ENCODE measurements at regions of chr9 and their contacts with region 1.

Region 1: DNA sequence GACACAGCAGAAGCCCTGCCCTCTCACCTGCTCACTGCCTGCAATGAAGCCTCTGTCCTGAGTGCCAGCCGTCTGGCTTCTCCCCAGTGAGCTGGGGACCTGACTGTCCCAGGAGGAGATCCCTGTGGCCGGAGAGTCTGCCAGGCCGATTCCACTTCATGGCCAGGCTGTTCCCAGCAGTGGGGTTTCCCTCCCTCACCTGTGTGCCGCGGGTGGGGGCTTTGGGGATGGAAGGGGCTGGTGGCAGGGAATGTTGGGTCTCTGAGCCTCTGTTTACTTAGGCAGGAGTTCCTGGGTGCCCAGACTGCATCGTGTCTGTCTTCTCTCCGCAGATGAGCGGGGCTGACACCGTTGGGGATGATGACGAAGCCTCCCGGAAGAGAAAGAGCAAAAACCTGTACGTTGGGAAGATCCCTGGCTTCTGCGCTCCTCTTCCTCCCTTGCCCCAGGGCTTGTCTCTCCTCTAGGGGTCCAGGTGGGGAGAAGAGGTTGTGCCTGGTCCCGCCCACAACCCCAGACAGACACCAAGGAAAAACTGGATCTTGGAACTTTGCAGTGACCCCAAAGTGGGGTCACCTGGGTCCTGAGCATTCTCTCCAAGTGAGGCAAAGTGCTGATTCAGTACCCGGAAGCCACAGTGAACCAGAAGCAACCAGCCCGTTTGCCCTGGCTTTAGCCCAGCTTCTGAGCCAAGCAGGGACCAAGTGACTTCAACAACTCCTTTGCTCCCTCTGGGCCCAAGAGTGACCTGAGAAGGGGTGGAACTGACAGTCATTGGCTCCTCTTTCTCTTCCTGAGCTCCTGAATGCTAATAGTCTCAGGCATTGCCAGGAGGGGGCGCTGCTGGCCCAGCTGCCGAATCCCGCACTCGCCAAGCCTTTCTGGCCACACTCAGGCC is 127.7 kb downstream of the RGS3 start:
- DNase-seq: peak; percentile 91
- ATAC-seq: peak; percentile 23

Region 2: GRCh38 chr9:113446323-113446740 is 144.9 kb before region 1 on chr9:
- intact Hi-C with region 1: loop called (anchors 5 kb)
- DNase-seq: no peak
- ATAC-seq: peak; percentile 68

Region 3: GRCh38 chr9:113541019-113541900 is 50.0 kb before region 1 on chr9:
- intact Hi-C with region 1: no loop called
- DNase-seq: no peak
- ATAC-seq: no peak

Region 4: GRCh38 chr9:113657703-113658544 is 66.7 kb after region 1 on chr9:
- intact Hi-C with region 1: loop called (anchors 1 kb)
- DNase-seq: peak; percentile 88
- ATAC-seq: peak; percentile 73

Region 5: DNA sequence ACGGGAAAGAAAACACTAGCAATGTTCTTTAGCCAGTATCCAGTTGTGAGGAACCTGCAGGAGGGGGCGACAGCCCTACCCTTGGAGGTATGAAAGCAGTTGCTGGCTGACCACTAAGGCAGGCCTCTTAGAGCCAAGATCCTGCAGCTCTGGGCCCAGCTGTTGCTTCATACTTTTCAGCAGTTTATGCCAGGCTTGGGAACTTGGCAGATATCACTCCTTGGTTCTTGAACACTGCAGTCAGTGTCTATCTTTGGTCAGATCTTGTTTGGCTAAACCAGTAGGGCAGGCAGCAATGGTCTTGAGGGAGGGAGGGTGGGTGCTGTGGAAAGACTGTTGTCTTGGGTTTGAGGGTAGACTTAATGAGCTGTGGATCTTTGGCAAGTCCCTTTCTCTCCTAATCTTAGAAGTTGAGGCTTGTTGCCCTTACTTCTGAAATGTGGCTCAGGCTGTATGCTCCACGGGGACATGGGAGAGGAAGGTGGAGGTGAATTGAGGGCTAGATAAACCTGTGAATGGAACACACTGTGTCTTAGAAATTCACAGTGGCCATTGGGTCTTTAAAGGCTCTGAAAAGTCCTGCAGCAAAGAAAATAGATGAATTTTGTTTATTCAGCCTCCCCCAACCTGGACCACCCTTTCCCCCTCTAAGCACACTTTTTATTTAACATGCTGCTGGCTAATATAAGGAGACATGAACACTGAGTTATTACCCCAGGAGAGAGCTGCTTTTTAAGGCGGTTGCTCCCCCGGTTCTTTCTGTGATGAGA is 322.4 kb after region 1 on chr9:
- intact Hi-C with region 1: no loop called
- DNase-seq: no peak
- ATAC-seq: no peak

Measured in left ventricle myocardium superior (tissue), 1 donor.